Gastrocnemius medialis (tissue), 4 donors: ENCODE measurements at regions of chr6 and their contacts with region 1.

Region 1: DNA sequence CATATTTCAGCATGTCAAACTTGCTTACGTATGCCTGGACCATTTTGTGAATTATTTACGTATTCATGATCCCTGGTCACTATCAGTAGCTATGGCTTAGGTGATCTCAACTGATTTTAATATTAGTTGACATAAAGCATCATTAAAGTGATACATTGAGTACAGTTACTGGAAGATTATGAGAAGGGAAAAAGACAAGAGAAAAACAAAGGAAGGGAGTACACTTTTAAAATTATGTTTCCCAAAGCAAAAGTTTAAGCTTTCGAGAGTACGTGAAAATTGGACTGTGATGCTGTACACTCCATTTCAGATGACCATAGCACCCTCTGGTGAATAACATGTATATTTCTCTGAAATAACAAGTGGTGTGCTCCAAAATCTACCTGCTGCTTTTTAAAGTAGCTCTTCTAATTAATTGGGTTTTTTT is 215.0 kb upstream of the HSF2 start:
- DNase-seq: no peak
- ATAC-seq: peak in 1 of 2 donors; percentile 49
- H3K4me3 ChIP-seq: peak overlapping the region in 1 of 4 donors; percentile 21
- H3K27ac ChIP-seq: no peak overlapping the region
- H3K4me1 ChIP-seq: peaks cover 0 to 3% of the 10 kb centered on the region in 2 donors
- H3K27me3 ChIP-seq: no peaks in the 10 kb centered on the region
- CTCF ChIP-seq: peak; percentile 14 to 52 (median 40)
- POLR2A ChIP-seq: no peak

Region 2: GRCh38 chr6:121055572-121056163 is 1128.7 kb before region 1 on chr6:
- in situ Hi-C with region 1: no loop called
- intact Hi-C with region 1: loop called (anchors 10 kb)
- DNase-seq: no peak
- ATAC-seq: peak; percentile 51 to 52
- H3K4me3 ChIP-seq: no peak overlapping the region
- H3K27ac ChIP-seq: no peak overlapping the region
- H3K4me1 ChIP-seq: no peaks in the 10 kb centered on the region
- H3K27me3 ChIP-seq: no peaks in the 10 kb centered on the region
- CTCF ChIP-seq: peak in 3 of 5 experiments; percentile 42 to 53 (median 45)
- POLR2A ChIP-seq: no peak

Region 3: DNA sequence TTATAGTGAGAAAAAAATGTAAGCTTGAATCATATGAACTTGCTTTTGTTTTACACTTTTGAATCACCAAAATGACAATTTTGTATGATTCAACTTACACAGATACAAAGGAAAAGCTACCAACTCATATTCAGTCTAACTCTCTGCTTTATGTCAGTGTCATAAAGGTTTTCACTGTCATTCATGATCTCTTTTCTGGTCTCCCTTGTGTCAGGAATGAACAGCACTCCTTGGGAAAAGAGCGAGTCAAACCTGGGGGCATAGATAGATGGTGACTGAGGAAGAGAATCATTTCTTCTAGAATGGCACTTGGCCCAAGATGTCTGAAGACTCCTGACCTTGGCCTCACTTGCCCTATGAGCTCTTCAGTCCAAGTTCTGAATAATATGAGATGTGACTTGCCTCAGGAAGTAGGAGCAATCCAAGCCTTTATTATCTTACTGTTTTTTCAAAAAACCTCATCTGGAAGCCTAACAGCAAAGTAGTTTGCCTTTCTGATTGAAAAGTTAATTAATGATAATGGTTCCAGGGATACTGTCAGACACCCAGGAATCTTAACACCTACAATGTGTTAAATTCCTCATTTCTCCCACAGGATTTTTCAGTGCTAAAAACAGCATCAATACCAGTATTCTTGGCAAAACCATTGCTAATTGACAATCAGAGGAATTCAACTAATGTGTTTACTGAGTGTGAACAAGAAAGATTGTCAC is 54.9 kb before region 1 on chr6:
- in situ Hi-C with region 1: no loop called
- intact Hi-C with region 1: loop called (anchors 5 kb)
- DNase-seq: no peak
- ATAC-seq: peak in 1 of 2 donors; percentile 9
- H3K4me3 ChIP-seq: no peak overlapping the region
- H3K27ac ChIP-seq: peak overlapping the region; percentile 68 to 92 (median 82)
- H3K4me1 ChIP-seq: peaks cover 37 to 43% of the 10 kb centered on the region in 2 donors
- H3K27me3 ChIP-seq: no peaks in the 10 kb centered on the region
- CTCF ChIP-seq: no peak
- POLR2A ChIP-seq: no peak

Region 4: GRCh38 chr6:122222761-122223160 is 38.3 kb after region 1 on chr6:
- in situ Hi-C with region 1: no loop called
- intact Hi-C with region 1: no loop called
- DNase-seq: no peak
- ATAC-seq: peak in 1 of 2 donors; percentile 89
- H3K4me3 ChIP-seq: no peak overlapping the region
- H3K27ac ChIP-seq: peak overlapping the region in 3 of 4 donors; percentile 60 to 64 (median 62)
- H3K4me1 ChIP-seq: peaks cover 8 to 9% of the 10 kb centered on the region in 2 donors
- H3K27me3 ChIP-seq: no peaks in the 10 kb centered on the region
- CTCF ChIP-seq: no peak
- POLR2A ChIP-seq: no peak

Region 5: DNA sequence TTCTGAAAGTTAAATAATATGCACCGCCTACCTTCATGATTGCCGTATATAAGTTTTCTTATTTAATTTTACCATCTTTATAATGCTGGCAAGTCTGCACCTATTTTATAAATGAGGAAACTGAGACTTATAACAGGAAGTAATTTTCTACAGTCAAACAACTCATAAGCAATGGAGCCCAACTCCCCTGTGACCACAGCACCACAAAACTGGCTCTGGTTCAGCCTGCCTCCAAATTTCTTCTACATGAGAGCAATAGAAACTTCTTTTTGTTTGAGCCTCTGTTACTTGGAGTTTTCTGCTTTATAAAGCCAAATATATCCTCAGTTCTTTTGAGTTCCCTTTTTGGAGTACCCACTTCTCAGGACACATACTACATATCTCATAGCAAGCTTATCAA is 84.0 kb after region 1 on chr6:
- in situ Hi-C with region 1: no loop called
- intact Hi-C with region 1: no loop called
- DNase-seq: no peak
- ATAC-seq: no peak
- H3K4me3 ChIP-seq: no peak overlapping the region
- H3K27ac ChIP-seq: no peak overlapping the region
- H3K4me1 ChIP-seq: no peaks in the 10 kb centered on the region
- H3K27me3 ChIP-seq: no peaks in the 10 kb centered on the region
- CTCF ChIP-seq: no peak
- POLR2A ChIP-seq: no peak